H1 (cell line): ENCODE measurements at regions of chr1 and their contacts with region 1.

Region 1: DNA sequence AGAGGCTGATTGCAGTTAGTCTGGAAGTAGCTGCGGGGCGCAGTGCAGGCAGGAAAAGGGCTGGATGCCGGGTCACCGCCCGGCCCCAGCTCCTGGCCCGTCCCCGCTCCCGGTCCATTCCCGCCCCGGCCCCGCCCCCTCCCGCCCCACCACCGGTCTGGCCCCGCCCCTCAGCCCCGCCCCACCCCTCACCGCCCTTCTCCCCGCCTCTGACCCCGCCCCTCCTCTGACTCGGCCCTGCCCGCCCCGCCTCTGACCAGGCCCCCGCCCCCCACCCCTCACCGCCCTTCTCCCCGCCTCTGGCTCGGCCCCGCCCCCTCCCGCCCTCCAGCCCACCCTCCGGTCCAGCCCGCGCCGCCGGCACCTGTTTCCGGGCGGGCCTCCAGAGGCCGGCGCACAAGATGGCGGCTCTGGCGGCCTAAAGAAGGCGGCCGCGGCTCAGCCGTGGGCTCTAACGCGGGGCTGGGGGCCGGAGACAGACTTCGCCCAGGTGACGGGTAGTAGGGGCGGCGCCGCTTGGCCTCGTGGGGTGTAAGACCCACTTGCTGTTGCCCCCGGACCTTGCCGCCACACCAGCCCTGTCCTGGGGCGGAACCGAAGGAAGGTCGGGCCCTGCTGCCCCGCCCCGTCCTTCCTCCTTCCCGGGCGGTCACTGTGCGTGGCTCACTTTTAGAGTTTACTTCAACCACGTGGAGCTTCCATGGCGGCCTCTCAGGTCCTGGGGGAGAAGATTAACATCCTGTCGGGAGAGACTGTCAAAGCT is at the start of gene UBIAD1:
- DNase-seq: peak; percentile 64 to 79
- H3K4me3 ChIP-seq: peak within 1 kb of the TSS; percentile 82 to 98 (median 92)
- H3K27ac ChIP-seq: peak within 1 kb of the TSS; percentile 92
- H3K4me1 ChIP-seq: peaks cover 0 to 3% (median 1%) of the 10 kb centered on the region in 4 experiments; a peak in 3 of 7 replicates
- H3K27me3 ChIP-seq: no peaks in the 10 kb centered on the region
- CTCF ChIP-seq: peak; percentile 13 to 24 (median 14); a peak in 3 of 4 replicates
- EP300 ChIP-seq: no peak
- POLR2A ChIP-seq: peak; percentile 46 to 87
- RAD21 ChIP-seq: peak; percentile 17 to 35; a peak in 2 of 4 replicates
- total RNA-seq, gene UBIAD1: 22.7 and 23.4 TPM in 2 replicates

Region 2: GRCh38 chr1:11262171-11263049 is 10.6 kb before region 1 on chr1 and contains the start of gene MTOR:
- CTCF ChIA-PET with region 1: interaction called, 19 read pairs
- POLR2A ChIA-PET with region 1: interaction called, 17 read pairs
- DNase-seq: peak; percentile 94 to 98
- H3K4me3 ChIP-seq: peak within 1 kb of the TSS; percentile 86 to 90 (median 88)
- H3K27ac ChIP-seq: peak within 1 kb of the TSS; percentile 60; the same call in 1 of the 2 replicates
- H3K4me1 ChIP-seq: no peaks in the 10 kb centered on the region; a peak in 1 of 7 replicates
- H3K27me3 ChIP-seq: no peaks in the 10 kb centered on the region
- CTCF ChIP-seq: peak in 2 of 3 experiments; percentile 27 to 33; a peak in 2 of 4 replicates
- EP300 ChIP-seq: no peak
- POLR2A ChIP-seq: peak; percentile 67 to 83
- RAD21 ChIP-seq: peak in 1 of 2 experiments; percentile 11; a peak in 1 of 4 replicates
- total RNA-seq, gene MTOR: 75.7 and 76.8 TPM in 2 replicates

Region 3: GRCh38 chr1:11284784-11285183 is 11.8 kb after region 1 on chr1:
- CTCF ChIA-PET with region 1: interaction called, 5 read pairs
- POLR2A ChIA-PET with region 1: interaction called, 13 read pairs
- DNase-seq: no peak
- H3K4me3 ChIP-seq: no peak overlapping the region
- H3K27ac ChIP-seq: no peak overlapping the region
- H3K4me1 ChIP-seq: peaks cover 9 to 28% (median 22%) of the 10 kb centered on the region in 4 experiments
- H3K27me3 ChIP-seq: no peaks in the 10 kb centered on the region
- CTCF ChIP-seq: no peak
- EP300 ChIP-seq: no peak
- POLR2A ChIP-seq: no peak
- RAD21 ChIP-seq: no peak